ENCODE measurements at regions of chr7 and their contacts with region 1.

Region 1: DNA sequence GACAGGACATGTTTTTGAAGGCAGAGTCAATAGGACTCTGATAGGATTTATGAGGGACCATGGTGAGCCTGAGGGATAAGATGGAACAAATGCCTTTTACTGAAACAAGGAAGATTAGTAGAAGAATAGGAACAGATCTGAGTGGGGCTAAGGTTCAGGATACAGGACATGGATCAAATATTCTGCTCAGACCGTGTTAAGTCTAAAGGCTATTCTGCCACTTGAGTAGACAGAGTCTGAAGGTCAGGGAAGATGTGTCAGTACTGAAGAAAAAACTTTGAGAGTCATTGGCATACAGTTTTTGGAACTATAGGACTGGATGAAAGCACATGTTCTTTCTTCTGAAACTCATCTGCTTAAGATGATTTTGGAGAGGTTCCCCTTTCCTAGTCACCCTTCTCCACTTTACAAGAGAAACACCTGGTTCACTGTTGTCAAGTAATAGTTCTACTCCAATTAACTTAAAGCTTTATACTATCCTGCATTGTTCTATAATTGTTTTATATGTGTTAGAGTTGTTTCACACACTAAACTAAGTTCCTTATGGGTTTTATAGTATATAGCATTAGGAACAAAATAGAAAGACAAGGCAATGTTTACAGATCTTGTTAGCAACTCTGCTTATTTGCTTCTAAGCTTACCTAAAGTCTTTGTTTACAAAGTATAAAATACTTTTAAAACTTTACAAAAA is 43.4 kb downstream of the WASL start:
- DNase-seq: no peak
- ATAC-seq: no peak
- H3K4me3 ChIP-seq: no peak overlapping the region
- H3K4me3 Mint-ChIP-seq: no peak overlapping the region
- H3K27ac ChIP-seq: no peak overlapping the region
- H3K27ac Mint-ChIP-seq: peak overlapping the region; percentile 13
- H3K4me1 ChIP-seq: no peaks in the 10 kb centered on the region
- H3K4me1 Mint-ChIP-seq: peaks cover 5% of the 10 kb centered on the region
- H3K27me3 ChIP-seq: no peaks in the 10 kb centered on the region
- H3K27me3 Mint-ChIP-seq: no peaks in the 10 kb centered on the region
- CTCF ChIP-seq: no peak

Region 2: DNA sequence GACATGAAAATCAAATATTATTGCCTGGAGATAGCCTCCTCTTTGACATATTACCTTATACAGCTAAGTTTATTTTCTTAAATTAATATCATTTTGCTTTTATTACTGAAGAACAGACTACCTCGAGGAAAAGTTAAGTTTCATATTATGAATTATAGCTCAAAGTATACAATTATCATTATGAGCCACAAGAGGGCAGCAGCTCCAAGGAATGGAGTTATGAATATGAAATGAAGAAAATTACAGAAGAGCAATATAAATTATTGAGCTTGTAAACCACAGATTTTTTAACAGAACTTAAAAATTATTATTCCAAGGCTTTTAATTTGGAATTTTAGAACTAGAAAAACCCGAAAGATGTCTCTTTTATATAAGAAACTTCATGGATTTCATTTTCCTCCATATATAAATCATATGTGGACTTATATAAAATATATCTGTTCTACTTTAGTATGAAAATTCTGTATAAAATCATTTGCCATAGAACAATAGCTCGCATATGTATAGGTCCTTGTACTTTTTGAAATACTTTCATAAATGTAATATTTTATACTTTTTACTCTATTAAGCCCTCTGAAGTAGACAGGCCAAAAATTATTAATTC is 211.1 kb before region 1 on chr7:
- CTCF ChIA-PET with region 1: interaction called, 3 read pairs
- POLR2A ChIA-PET with region 1: no interaction called
- intact Hi-C with region 1: loop called (anchors 1 to 2 kb)
- DNase-seq: peak in 5 of 9 experiments; percentile 23 to 63 (median 35)
- ATAC-seq: no peak
- H3K4me3 ChIP-seq: no peak overlapping the region
- H3K4me3 Mint-ChIP-seq: no peak overlapping the region
- H3K27ac ChIP-seq: no peak overlapping the region
- H3K27ac Mint-ChIP-seq: no peak overlapping the region
- H3K4me1 ChIP-seq: no peaks in the 10 kb centered on the region
- H3K4me1 Mint-ChIP-seq: no peaks in the 10 kb centered on the region
- H3K27me3 ChIP-seq: peaks cover 0 to 2% of the 10 kb centered on the region in 2 experiments
- H3K27me3 Mint-ChIP-seq: peaks cover 11% of the 10 kb centered on the region
- CTCF ChIP-seq: peak; percentile 93

Region 3: DNA sequence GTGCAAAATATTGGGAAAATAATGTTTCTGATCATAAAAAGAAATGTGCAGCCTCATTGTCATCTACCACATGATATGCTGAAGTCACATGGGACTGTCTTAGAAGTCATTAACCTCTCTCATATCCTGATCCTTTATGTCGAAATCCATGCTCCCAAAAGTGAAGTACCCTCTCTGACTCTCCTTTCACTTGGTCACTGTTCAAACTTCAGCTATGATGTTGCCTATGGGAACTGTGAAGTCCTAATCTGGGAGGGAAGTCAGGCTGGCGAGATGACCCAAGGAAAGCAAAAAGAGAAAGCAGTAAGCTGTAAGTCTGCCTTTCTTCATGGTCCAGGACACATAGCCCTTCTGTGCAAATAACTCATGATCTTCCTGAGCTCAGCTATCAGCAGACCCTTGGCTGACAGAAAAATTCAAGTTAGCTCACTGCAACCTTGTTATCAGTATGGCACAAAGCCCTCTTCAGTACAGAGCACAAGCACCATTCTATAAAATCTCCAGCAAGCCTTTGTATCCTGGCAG is 13.9 kb after region 1 on chr7:
- CTCF ChIA-PET with region 1: no interaction called
- POLR2A ChIA-PET with region 1: no interaction called
- intact Hi-C with region 1: loop called in 1 of 2 experiments (anchors 2 kb)
- DNase-seq: no peak
- ATAC-seq: no peak
- H3K4me3 ChIP-seq: no peak overlapping the region
- H3K4me3 Mint-ChIP-seq: no peak overlapping the region
- H3K27ac ChIP-seq: no peak overlapping the region
- H3K27ac Mint-ChIP-seq: peak overlapping the region; percentile 29
- H3K4me1 ChIP-seq: peaks cover 13% of the 10 kb centered on the region
- H3K4me1 Mint-ChIP-seq: peaks cover 75% of the 10 kb centered on the region
- H3K27me3 ChIP-seq: no peaks in the 10 kb centered on the region
- H3K27me3 Mint-ChIP-seq: no peaks in the 10 kb centered on the region
- CTCF ChIP-seq: no peak